Gastrocnemius medialis (tissue), 4 donors: ENCODE measurements at regions of chr2 and their contacts with region 1.

Region 1: GRCh38 chr2:45009303-45009927 is at the start of gene SIX2:
- DNase-seq: peak; percentile 95 to 97
- ATAC-seq: peak; percentile 80 to 84
- H3K4me3 ChIP-seq: peak within 1 kb of the TSS; percentile 64 to 85 (median 72)
- H3K27ac ChIP-seq: peak within 1 kb of the TSS; percentile 90 to 97 (median 90)
- H3K4me1 ChIP-seq: peaks cover 20 to 49% of the 10 kb centered on the region in 2 donors
- H3K27me3 ChIP-seq: peaks cover 0 to 25% (median 0%) of the 10 kb centered on the region in 3 donors
- CTCF ChIP-seq: peak in 1 of 5 experiments; percentile 10
- POLR2A ChIP-seq: peak; percentile 87 to 96
- total RNA-seq, gene SIX2: 28.9 to 65.5 (median 50.5) TPM

Region 2: GRCh38 chr2:44879269-44880124 is 129.9 kb before region 1 on chr2:
- in situ Hi-C with region 1: no loop called
- intact Hi-C with region 1: no loop called
- DNase-seq: no peak
- ATAC-seq: no peak
- H3K4me3 ChIP-seq: no peak overlapping the region
- H3K27ac ChIP-seq: no peak overlapping the region
- H3K4me1 ChIP-seq: no peaks in the 10 kb centered on the region
- H3K27me3 ChIP-seq: peaks cover 0 to 5% (median 0%) of the 10 kb centered on the region in 3 donors
- CTCF ChIP-seq: no peak
- POLR2A ChIP-seq: no peak

Region 3: DNA sequence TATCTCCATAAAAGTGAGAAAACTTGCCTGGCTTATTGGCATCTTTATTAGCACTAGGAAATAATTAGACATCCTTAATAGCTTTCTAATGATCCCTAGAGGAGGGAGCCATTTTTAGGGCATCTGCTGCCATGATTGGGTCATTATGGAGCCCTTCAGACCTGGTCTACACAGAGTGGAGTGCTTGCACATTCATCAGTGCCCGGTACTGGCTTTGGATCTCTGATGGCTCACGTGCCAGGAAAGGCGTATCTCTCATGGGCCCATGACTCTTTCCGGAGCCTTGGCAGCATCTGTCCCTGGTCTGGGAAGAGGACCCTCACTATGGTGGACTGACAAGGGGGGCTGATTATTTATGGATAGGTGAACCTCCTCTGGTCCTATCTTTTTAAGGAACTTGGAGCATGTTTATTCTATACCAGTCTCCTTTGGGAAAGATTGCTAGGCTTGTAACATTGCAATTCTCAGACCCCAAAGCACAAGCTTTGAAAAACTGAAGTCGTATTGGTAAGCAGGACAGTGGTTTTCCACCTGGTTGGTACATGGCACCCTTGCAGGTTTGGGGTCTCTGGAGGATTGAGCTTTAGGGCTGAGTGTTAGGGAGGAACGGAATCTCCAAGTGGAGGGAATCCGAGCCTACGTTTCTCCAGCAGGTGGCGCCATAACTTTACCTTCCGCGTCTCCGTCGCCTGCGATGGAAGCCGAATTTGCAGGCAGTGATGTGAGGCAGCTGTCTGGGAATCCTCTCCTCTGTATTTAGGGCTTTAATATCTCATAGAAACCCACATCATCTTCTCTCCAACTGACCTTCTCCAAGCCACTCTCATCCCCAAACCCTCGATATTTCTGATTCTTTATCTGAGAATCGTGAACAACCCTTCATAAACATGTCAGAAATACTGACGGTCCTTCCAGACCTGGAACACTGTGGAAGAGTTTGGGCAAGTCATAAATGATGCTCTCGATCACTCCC is 28.0 kb before region 1 on chr2:
- in situ Hi-C with region 1: no loop called
- intact Hi-C with region 1: loop called (anchors 1 kb)
- DNase-seq: peak; percentile 41 to 56
- ATAC-seq: peak; percentile 86 to 93
- H3K4me3 ChIP-seq: no peak overlapping the region
- H3K27ac ChIP-seq: no peak overlapping the region
- H3K4me1 ChIP-seq: no peaks in the 10 kb centered on the region
- H3K27me3 ChIP-seq: peaks cover 0 to 2% (median 0%) of the 10 kb centered on the region in 3 donors
- CTCF ChIP-seq: peak; percentile 71 to 92 (median 89)
- POLR2A ChIP-seq: no peak

Region 4: GRCh38 chr2:45483997-45484396 is 474.6 kb after region 1 on chr2:
- in situ Hi-C with region 1: no loop called
- intact Hi-C with region 1: loop called (anchors 2 kb)
- DNase-seq: no peak
- ATAC-seq: no peak
- H3K4me3 ChIP-seq: no peak overlapping the region
- H3K27ac ChIP-seq: no peak overlapping the region
- H3K4me1 ChIP-seq: no peaks in the 10 kb centered on the region
- H3K27me3 ChIP-seq: no peaks in the 10 kb centered on the region
- CTCF ChIP-seq: no peak
- POLR2A ChIP-seq: no peak

Region 5: DNA sequence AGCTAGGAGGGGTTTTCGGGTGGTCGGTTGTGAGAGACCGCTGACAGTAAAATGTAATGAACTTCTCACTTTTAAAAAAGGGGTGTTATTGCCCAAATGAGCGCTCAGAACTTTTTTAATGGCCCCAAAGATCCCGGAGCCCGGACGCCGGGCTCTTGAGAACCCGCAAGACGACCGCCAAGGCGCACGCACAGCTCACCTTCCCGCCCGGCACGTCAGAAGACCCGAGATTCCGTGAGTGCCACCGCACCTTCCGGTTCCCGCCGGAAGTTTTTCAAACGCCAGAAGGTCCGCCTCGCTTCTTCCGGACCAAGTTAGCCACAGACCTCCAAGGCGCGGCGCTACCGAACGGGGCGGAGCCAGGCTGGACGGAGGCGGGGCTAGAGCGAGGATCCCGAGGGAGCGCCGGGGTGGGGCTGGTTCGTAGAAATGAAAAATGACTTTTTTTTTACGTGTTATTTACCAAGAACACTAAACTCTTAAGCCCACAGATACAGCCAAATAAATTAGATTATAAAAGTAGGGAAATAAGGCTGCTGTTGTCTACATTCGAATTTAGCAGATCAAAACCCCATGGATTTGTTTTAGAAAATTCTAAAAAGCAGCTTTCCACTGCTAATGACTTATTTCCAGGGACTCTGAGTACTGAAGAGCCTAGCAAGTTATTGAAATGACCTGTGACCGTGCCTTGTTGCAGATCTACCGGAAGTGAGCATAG is 601.8 kb after region 1 on chr2 and contains the start of gene SRBD1:
- in situ Hi-C with region 1: no loop called
- intact Hi-C with region 1: loop called (anchors 2 kb)
- DNase-seq: peak; percentile 93 to 94
- ATAC-seq: peak; percentile 98 to 99
- H3K4me3 ChIP-seq: peak within 1 kb of the TSS; percentile 65 to 87 (median 79)
- H3K27ac ChIP-seq: peak within 1 kb of the TSS; percentile 85 to 95 (median 90)
- H3K4me1 ChIP-seq: peaks cover 10 to 13% of the 10 kb centered on the region in 2 donors
- H3K27me3 ChIP-seq: no peaks in the 10 kb centered on the region
- CTCF ChIP-seq: no peak
- POLR2A ChIP-seq: peak; percentile 62 to 75
- total RNA-seq, gene SRBD1: 3.0 to 10.1 (median 4.5) TPM